Colonic mucosa (tissue), 4 donors: ENCODE measurements at regions of chr10 and their contacts with region 1.

Region 1: GRCh38 chr10:31603235-31604087 is 284.4 kb downstream of the ZEB1 start:
- DNase-seq: peak; percentile 93
- H3K4me3 ChIP-seq: peak overlapping the region; percentile 56
- H3K27ac ChIP-seq: peak overlapping the region; percentile 62
- H3K4me1 ChIP-seq: no peaks in the 10 kb centered on the region
- H3K27me3 ChIP-seq: no peaks in the 10 kb centered on the region
- CTCF ChIP-seq: no peak

Region 2: GRCh38 chr10:31759799-31760626 is 156.6 kb after region 1 on chr10:
- intact Hi-C with region 1: loop called (anchors 10 kb)
- DNase-seq: peak; percentile 96
- H3K4me3 ChIP-seq: peak overlapping the region; percentile 83
- H3K27ac ChIP-seq: peak overlapping the region; percentile 97
- H3K4me1 ChIP-seq: no peaks in the 10 kb centered on the region
- H3K27me3 ChIP-seq: no peaks in the 10 kb centered on the region
- CTCF ChIP-seq: no peak